Activated CD4-positive, alpha-beta T cell treated with anti-CD3 and anti-CD28 coated beads for 36 hours (primary cell): ENCODE measurements at regions of chr4 and their contacts with region 1.

Region 1: DNA sequence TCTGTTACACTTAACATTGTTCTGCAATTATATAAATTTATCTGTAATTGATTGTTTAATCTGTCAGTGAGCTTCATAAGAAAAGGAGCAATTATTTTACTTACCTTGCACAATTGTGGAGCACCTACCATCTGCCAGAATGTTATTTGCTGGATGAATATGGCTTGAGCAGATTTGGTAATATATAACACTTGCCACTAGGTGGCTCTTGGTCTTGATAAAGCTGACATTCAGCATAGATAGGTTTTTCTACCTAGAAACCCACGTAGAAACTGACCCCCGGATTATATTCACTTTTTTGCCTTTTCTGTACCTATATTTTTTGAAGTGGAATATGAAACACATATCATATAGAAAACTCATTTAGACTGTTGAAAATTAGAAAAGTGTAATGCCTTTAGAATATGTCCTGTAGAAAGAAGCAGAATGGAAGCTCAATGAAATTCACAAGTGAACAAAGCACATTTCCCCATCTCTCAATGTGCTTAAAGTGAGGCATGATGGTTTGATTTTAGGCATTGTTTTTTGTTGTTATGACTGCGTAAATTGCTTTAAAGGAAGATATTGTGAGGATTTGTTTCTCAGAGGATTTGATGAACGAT is 9.5 kb downstream of the RBPJ start:
- DNase-seq: no peak
- ATAC-seq: peak; percentile 80
- H3K4me3 Mint-ChIP-seq: no peak overlapping the region
- H3K27ac Mint-ChIP-seq: peak overlapping the region; percentile 49
- H3K4me1 Mint-ChIP-seq: peaks cover 48% of the 10 kb centered on the region
- H3K27me3 Mint-ChIP-seq: no peaks in the 10 kb centered on the region

Region 2: GRCh38 chr4:25702848-25703247 is 627.4 kb before region 1 on chr4:
- CTCF ChIA-PET with region 1: no interaction called
- POLR2A ChIA-PET with region 1: no interaction called
- intact Hi-C with region 1: no loop called
- DNase-seq: no peak
- ATAC-seq: no peak
- H3K4me3 Mint-ChIP-seq: no peak overlapping the region
- H3K27ac Mint-ChIP-seq: no peak overlapping the region
- H3K4me1 Mint-ChIP-seq: no peaks in the 10 kb centered on the region
- H3K27me3 Mint-ChIP-seq: no peaks in the 10 kb centered on the region

Region 3: GRCh38 chr4:26342328-26343037 is 12.2 kb after region 1 on chr4:
- CTCF ChIA-PET with region 1: interaction called, 75 read pairs
- POLR2A ChIA-PET with region 1: no interaction called
- intact Hi-C with region 1: no loop called
- DNase-seq: no peak
- ATAC-seq: peak; percentile 83
- H3K4me3 Mint-ChIP-seq: no peak overlapping the region
- H3K27ac Mint-ChIP-seq: no peak overlapping the region
- H3K4me1 Mint-ChIP-seq: peaks cover 65% of the 10 kb centered on the region
- H3K27me3 Mint-ChIP-seq: no peaks in the 10 kb centered on the region

Region 4: DNA sequence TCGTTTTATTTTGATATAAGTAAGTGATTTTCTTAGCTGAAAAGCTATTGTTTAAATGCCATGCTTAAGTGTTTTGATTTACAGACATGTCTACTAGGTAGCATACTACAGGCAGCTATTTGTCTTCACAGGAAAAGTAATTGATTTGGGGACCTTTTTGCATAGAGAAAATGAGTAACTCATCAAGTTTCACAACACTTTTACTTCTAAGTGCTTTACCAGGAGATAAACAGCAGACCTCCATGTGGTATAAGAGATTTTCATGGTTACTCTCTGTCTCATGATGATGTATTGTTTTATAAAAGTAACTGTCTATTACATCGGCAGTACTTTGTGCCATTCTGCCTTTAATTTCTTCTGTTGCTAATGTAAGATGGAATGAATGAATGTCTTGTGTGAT is 19.2 kb after region 1 on chr4:
- CTCF ChIA-PET with region 1: interaction called, 75 read pairs
- POLR2A ChIA-PET with region 1: interaction called, 3 read pairs
- intact Hi-C with region 1: no loop called
- DNase-seq: no peak
- ATAC-seq: peak; percentile 61
- H3K4me3 Mint-ChIP-seq: no peak overlapping the region
- H3K27ac Mint-ChIP-seq: no peak overlapping the region
- H3K4me1 Mint-ChIP-seq: peaks cover 63% of the 10 kb centered on the region
- H3K27me3 Mint-ChIP-seq: no peaks in the 10 kb centered on the region

Region 5: DNA sequence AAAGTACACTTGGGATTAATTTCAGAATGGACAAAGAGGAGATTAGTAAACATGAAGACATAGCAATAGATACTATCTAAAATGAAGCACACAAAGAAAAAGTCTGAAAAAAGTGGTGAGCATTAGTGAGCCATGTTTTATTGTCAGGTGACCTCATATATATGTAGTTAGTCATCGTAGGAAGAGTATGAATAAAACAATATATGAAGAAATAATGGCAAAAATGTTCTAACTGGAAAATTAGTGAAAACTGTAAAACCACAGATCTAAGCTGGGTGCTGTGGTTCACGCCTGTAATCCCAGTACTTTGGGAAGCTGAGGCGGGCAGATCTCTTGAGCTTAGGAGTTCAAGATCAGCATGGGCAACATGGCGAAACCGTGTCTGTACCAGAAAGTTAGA is 58.4 kb after region 1 on chr4:
- CTCF ChIA-PET with region 1: interaction called, 13 read pairs
- POLR2A ChIA-PET with region 1: no interaction called
- intact Hi-C with region 1: no loop called
- DNase-seq: no peak
- ATAC-seq: no peak
- H3K4me3 Mint-ChIP-seq: no peak overlapping the region
- H3K27ac Mint-ChIP-seq: no peak overlapping the region
- H3K4me1 Mint-ChIP-seq: peaks cover 18% of the 10 kb centered on the region
- H3K27me3 Mint-ChIP-seq: no peaks in the 10 kb centered on the region

Region 6: DNA sequence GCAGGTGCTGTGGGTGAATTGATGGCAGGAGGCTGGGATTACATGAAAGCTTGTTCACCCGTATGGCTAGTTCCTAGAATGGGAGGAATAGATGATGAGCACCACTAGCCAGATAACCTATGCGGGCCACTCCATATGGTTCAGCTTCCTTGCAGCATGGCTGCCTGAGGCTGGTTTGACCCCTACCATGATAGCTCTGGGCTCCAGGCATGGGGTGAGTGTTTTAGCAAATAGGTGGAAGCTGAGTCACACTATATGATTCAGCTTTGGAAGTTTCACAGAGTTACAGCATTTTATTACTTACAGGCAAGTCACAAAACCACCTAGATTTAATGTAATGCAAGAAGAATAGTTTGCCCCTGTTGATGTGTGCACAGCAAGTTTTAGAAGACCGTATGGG is 1133.5 kb after region 1 on chr4:
- CTCF ChIA-PET with region 1: no interaction called
- POLR2A ChIA-PET with region 1: no interaction called
- intact Hi-C with region 1: no loop called
- DNase-seq: no peak
- ATAC-seq: no peak
- H3K4me3 Mint-ChIP-seq: no peak overlapping the region
- H3K27ac Mint-ChIP-seq: no peak overlapping the region
- H3K4me1 Mint-ChIP-seq: no peaks in the 10 kb centered on the region
- H3K27me3 Mint-ChIP-seq: no peaks in the 10 kb centered on the region